GM10248 (cell line): ENCODE measurements at regions of chr2 and their contacts with region 1.

Region 1: DNA sequence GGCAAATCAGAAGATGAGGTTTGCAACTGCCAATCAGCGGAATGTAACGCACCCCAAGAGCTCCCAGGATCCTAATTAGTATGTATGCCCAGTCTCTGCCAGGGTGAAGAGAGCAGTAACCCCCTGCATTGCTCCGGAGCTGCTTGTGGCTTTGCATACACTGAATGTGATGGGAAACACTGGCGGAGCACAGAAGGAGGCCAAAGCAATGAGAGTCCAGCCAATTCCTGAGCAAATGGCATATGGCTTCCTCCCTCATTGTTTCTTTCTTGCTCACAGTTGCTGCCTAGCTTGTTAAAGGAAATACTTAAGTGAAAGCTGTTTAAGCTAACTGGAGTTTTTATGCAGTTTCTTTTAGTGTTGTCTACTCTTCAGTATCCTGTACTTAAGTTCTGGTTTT is 343.5 kb upstream of the NT5C1B start:
- DNase-seq: no peak
- CTCF ChIP-seq: no peak

Region 2: DNA sequence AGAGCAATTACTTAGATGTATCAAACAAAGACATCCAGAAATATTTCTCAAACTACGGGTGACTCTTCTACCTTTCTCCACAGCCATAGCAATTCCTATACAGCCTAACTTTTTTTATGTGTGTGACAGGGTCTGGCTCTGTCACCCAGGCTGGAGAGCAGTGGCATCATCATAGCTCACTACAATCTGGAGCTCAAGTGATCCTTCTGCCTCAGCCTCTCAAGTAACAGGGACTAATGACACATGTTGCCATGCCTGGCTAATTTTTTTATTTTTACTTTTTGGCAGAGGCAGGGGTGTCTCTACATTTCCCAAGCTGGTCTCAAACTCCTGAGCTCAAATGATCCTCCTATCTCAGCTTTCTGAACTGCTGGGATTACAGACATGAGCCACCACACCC is 14.6 kb before region 1 on chr2:
- CTCF ChIA-PET with region 1: interaction called, 14 read pairs
- POLR2A ChIA-PET with region 1: no interaction called
- DNase-seq: no peak
- CTCF ChIP-seq: no peak